Activated B cell treated with CpG ODN at 0.5 μM for 24 hours (primary cell): ENCODE measurements at regions of chr3 and their contacts with region 1.

Region 1: DNA sequence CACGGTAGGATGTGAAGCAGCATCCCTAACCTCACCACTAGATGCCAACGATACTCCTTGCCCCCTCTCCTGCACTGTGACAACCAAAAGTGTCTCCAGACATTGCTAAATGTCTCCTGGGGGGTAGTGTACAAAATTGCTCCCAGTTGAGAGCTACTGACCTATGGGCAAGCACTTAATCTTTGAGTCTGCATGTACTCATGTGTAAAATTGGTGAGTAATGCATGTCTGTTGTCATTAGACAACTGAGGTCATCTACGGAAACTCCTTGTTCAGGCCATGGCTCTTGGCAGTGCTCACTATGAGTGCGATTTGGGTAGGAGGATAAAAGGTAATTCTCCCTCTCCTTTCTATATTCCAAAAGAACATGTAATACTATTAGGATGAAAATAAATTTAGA is 29.2 kb downstream of the PDHB start:
- DNase-seq: no peak
- ATAC-seq: peak; percentile 48
- H3K4me3 Mint-ChIP-seq: no peak overlapping the region
- H3K27ac Mint-ChIP-seq: peak overlapping the region; percentile 68
- H3K4me1 Mint-ChIP-seq: peaks cover 59% of the 10 kb centered on the region
- H3K27me3 Mint-ChIP-seq: no peaks in the 10 kb centered on the region
- CTCF ChIP-seq: no peak

Region 2: DNA sequence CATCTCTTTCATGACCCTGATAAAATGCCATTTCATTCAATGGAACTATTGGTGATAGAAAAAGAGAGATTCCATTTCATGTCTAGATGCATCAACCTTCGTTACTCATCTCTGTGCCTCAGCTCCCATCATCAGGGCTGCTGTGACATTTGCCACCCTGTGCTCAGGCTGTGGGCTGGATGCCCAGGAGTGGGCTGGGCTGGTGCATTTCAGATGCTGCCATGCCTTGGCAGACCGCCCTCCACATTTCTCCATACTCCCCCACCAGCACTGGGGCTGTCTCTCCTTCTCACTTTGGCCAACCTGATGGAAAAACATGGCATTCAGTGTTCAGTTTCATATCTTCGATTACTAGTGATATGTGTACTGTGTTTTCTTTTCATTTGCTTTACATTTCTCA is 252.8 kb before region 1 on chr3:
- CTCF ChIA-PET with region 1: no interaction called
- POLR2A ChIA-PET with region 1: no interaction called
- intact Hi-C with region 1: no loop called
- DNase-seq: no peak
- ATAC-seq: no peak
- H3K4me3 Mint-ChIP-seq: no peak overlapping the region
- H3K27ac Mint-ChIP-seq: no peak overlapping the region
- H3K4me1 Mint-ChIP-seq: no peaks in the 10 kb centered on the region
- H3K27me3 Mint-ChIP-seq: no peaks in the 10 kb centered on the region
- CTCF ChIP-seq: no peak

Region 3: DNA sequence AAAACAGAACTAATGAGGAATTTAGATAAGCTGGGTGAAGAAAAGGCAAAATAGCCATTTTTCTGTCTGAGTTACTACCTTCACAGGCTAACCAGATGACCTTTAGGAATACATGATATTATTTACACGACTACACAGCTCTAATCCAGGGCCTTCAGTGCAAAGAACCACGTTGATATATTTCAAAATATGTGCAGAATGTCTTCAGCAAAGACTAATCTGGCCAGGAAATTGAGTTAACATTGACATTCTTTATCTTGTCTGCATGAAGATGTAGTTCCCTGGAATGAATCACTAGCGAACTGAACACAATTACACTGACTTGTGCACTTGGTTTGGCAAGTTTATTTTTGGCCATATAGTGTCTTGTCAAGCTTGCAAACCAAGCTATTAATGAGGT is 12.2 kb before region 1 on chr3:
- CTCF ChIA-PET with region 1: interaction called, 3 read pairs
- POLR2A ChIA-PET with region 1: no interaction called
- intact Hi-C with region 1: loop called (anchors 2 kb)
- DNase-seq: no peak
- ATAC-seq: no peak
- H3K4me3 Mint-ChIP-seq: no peak overlapping the region
- H3K27ac Mint-ChIP-seq: no peak overlapping the region
- H3K4me1 Mint-ChIP-seq: peaks cover 23% of the 10 kb centered on the region
- H3K27me3 Mint-ChIP-seq: no peaks in the 10 kb centered on the region
- CTCF ChIP-seq: no peak